ENCODE measurements at regions of chr15 and their contacts with region 1.

Region 1: DNA sequence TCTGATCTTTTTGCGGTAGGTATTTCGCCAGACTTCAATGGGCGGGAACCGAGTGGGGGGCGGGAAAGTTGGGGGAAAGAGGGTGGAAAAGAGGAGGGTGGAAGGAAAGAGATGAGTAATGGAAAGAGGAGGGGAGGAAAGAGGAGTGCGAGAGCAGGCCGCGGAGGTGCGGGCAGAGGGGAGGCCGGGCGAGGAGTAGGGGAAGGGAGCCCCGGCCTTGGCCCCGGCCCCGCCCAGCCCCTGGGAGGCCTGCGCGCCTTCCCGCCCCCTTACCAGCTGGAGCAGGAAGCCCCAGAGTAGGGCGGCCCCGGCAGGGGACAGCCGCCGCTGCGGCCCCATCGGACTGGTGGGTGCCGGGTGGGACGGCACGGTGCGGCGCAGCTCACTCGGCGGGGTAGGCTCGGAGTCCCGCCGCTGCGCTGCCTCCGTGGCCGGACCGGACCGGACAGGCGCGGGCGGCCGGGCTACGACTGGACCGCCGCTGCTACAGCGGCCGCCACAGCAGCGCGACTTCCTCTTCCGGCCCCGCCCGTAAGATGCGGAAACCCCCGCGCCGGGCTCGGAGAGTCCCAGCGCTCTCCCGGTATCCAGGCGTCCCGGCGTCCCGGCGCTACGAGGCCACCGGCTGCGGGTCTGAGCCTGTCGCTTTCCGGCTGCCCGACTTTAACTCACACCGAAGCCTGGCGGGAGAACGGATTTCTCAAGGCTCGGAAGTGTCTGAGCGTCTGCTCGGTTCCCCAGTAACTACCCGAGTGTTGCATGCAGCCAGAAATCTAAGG is at the start of gene SPPL2A:
- DNase-seq: peak; percentile 75 to 87
- ATAC-seq: peak; percentile 39 to 42
- H3K4me3 ChIP-seq: peak within 1 kb of the TSS; percentile 67 to 81 (median 74)
- H3K27ac ChIP-seq: peak within 1 kb of the TSS; percentile 93 to 98 (median 97)
- H3K4me1 ChIP-seq: peaks cover 37 to 46% of the 10 kb centered on the region in 2 donors
- H3K27me3 ChIP-seq: no peaks in the 10 kb centered on the region
- CTCF ChIP-seq: peak in 1 of 5 experiments; percentile 5
- POLR2A ChIP-seq: peak; percentile 96 to 97
- total RNA-seq, gene SPPL2A: 577 to 774 (median 620) TPM

Region 2: DNA sequence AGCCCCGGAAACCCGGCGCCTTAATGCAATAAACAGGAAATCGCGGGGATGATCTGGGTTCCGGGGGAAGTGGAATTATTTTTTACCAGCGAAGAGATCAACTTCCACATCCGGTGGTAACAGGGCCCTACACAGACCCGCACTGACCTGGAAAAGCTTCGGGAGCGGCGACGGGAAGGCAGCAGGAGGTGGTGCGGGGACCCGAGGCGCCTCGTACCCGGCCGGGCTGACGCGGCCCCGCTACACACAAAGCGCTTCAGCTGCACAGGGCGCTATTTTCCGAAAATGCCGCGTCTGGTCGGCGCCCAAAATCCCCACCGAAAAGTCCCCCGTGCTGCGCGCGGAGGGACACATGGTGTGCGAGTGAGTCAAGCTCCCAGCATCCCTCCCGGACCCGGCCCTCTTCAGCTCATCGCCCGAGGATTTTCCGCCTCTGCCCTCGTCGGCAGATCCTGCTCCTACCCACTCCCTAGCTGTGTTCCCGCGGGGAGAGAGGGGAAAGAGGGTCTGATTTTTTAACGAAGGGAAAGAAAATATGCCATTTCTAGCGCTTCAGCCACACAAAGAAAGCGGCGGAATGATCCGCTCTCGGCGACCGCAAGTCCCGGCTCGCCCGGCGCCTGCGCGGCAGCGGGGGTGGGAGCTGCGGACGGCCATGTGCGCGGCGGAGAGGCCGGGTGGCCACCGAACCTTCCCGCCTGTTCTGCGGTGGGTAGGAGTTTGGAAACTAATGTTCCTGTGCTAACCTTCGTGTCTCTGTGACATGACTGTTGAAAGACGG is 410.4 kb before region 1 on chr15 and contains the start of gene GABPB1:
- in situ Hi-C with region 1: no loop called
- intact Hi-C with region 1: loop called (anchors 10 kb)
- DNase-seq: peak; percentile 79 to 80
- ATAC-seq: peak; percentile 87 to 90
- H3K4me3 ChIP-seq: peak within 1 kb of the TSS; percentile 79 to 94 (median 81)
- H3K27ac ChIP-seq: peak within 1 kb of the TSS; percentile 93 to 97 (median 94)
- H3K4me1 ChIP-seq: peaks cover 44 to 46% of the 10 kb centered on the region in 2 donors
- H3K27me3 ChIP-seq: no peaks in the 10 kb centered on the region
- CTCF ChIP-seq: no peak
- POLR2A ChIP-seq: peak; percentile 53 to 64
- total RNA-seq, gene GABPB1: 7.4 to 11.5 (median 8.7) TPM

Region 3: GRCh38 chr15:50707878-50708427 is 57.4 kb before region 1 on chr15:
- in situ Hi-C with region 1: no loop called
- intact Hi-C with region 1: loop called (anchors 5 kb)
- DNase-seq: no peak
- ATAC-seq: peak; percentile 79 to 87
- H3K4me3 ChIP-seq: no peak overlapping the region
- H3K27ac ChIP-seq: peak overlapping the region; percentile 55 to 74 (median 72)
- H3K4me1 ChIP-seq: peaks cover 8 to 11% of the 10 kb centered on the region in 2 donors
- H3K27me3 ChIP-seq: no peaks in the 10 kb centered on the region
- CTCF ChIP-seq: no peak
- POLR2A ChIP-seq: no peak

Measured in gastrocnemius medialis (tissue), 4 donors.